ENCODE measurements at regions of chrX and their contacts with region 1.

Region 1: DNA sequence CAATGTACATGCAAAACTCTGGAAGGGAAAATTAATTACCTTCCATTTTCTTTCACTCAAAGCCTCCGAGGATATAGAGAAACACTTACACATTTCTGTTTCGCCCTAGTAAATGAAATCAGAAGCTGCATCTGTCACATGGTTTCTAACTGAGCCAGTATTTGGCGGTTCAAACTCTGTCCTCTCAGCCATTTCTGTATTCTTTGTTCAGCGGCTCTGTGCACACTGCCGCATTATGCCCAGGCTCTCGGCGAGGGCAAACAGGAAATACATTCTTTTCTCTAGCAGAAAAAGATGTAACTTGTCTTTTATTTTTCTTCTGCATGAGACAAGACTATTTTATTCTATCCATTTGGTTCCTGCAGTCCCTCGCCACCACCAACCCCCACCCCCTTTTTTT is 71.4 kb upstream of the GPM6B start:
- DNase-seq: peak in 6 of 10 donors; percentile 20 to 89 (median 40)

Region 2: DNA sequence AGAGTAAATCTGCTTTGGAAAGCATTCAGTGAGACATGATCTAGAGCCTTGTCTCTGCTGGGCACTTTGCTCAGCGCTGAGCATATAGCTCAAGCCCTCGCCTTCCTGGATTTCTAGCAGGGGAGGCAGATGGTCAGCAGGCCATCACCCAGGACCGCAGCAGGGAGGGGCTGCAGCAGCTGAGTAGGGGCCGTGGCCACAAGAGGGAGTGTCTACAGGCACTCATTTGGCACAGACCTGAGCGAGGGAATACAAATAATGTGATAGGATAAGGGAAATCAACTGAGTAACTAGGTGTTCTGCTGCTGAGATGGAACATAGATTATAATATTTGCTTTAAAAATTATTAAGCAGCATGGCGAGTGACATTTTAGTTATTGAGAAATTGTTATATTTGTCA is 123.5 kb before region 1 on chrX:
- intact Hi-C with region 1: loop called (anchors 10 kb)
- DNase-seq: peak in 5 of 10 donors; percentile 31 to 91 (median 53)